Pancreas (tissue), 10 donors: ENCODE measurements at regions of chr7 and their contacts with region 1.

Region 1: DNA sequence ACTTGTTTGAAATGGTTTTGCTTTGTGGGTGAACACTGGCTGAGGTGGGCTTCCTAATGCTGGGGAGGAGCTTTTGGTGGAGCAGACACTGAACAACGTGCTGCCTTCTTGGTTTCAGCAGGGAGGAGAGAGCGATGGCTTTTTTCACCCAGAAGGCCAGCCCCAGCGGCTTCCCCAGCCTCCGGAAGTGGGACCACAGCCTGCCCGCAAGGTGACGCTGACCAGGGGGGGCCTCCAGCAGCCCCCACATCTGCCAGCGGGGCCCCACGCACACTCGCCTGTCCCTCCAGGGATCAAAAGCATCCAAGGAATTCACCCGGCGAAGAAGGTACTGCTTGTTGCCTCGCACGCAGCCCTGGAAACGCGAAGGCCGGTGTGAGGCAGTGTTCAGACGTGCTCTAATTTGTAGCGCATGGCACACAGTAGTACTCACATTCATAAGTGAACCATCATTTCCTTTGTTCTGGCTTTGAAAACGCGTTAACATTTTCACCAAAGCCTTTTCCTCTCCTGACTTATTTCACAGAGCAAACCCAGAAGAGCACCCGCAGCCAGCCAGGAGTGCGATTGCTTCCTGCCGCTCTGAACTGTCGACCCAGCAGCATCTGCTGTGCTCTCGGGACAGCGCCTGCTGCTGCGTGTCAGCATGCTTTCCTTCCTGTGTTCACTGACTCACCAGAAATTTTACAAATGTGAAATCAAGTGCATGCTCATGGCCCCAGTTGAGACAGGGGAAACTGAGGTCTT is 48.4 kb downstream of the SHH start:
- DNase-seq: no peak
- ATAC-seq: peak in 3 of 4 donors; percentile 36 to 63 (median 39)
- H3K4me3 ChIP-seq: no peak overlapping the region
- H3K27ac ChIP-seq: peak overlapping the region in 1 of 4 donors; percentile 13
- H3K4me1 ChIP-seq: peaks cover 0 to 3% (median 0%) of the 10 kb centered on the region in 3 donors
- H3K27me3 ChIP-seq: no peaks in the 10 kb centered on the region
- CTCF ChIP-seq: no peak

Region 2: GRCh38 chr7:154867068-154867467 is 896.8 kb before region 1 on chr7:
- intact Hi-C with region 1: no loop called
- DNase-seq: no peak
- ATAC-seq: no peak
- H3K4me3 ChIP-seq: no peak overlapping the region
- H3K27ac ChIP-seq: no peak overlapping the region
- H3K4me1 ChIP-seq: no peaks in the 10 kb centered on the region
- H3K27me3 ChIP-seq: no peaks in the 10 kb centered on the region
- CTCF ChIP-seq: no peak

Region 3: GRCh38 chr7:155380221-155380861 is 383.5 kb before region 1 on chr7:
- intact Hi-C with region 1: loop called in 1 of 3 experiments (anchors 10 kb)
- DNase-seq: peak; percentile 67 to 87 (median 78)
- ATAC-seq: peak; percentile 84 to 92 (median 90)
- H3K4me3 ChIP-seq: no peak overlapping the region
- H3K27ac ChIP-seq: no peak overlapping the region
- H3K4me1 ChIP-seq: peaks cover 0 to 28% (median 8%) of the 10 kb centered on the region in 3 donors
- H3K27me3 ChIP-seq: peaks cover 5 to 62% (median 17%) of the 10 kb centered on the region in 4 donors
- CTCF ChIP-seq: peak; percentile 62 to 77 (median 72)

Region 4: DNA sequence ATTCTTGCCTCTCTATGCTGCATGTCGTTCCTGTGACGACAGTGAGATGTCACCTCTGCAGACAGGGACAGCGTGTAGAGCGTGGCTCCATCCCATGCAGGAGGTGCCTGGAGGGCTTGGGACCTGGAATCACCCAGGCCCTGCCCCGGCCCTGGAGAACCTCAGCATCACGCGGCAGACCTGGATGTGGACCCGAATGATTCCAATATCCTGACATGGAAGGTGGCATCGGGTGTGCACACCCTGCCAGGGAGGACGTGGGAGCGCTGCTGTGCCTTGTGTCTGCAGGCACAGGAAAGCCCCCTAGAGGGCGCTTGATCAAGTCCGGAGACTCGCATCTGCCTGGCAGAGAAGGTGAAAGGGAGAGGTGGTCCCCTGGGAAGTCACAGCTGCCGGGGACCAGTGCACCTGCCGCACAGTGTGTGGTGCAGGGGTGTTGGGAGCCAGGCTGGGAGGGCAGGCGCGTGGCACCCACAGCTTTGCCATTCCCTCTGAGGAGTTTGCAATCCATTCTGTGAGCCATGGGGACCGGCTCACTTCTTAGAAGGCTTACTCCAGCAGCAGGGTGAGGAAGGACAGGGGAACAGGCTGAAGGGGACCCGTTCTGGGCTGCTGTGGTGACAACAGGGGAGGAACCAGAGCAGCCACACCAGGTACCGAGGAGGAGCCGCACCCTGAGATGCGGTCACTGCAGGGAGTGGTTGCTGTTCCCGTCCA is 351.2 kb before region 1 on chr7:
- intact Hi-C with region 1: loop called in 1 of 3 experiments (anchors 10 kb)
- DNase-seq: peak; percentile 35 to 85 (median 72)
- ATAC-seq: peak; percentile 56 to 95 (median 86)
- H3K4me3 ChIP-seq: no peak overlapping the region
- H3K27ac ChIP-seq: no peak overlapping the region
- H3K4me1 ChIP-seq: no peaks in the 10 kb centered on the region
- H3K27me3 ChIP-seq: no peaks in the 10 kb centered on the region
- CTCF ChIP-seq: peak; percentile 78 to 83 (median 82)

Region 5: GRCh38 chr7:155685070-155685790 is 78.6 kb before region 1 on chr7:
- intact Hi-C with region 1: no loop called
- DNase-seq: no peak
- ATAC-seq: no peak
- H3K4me3 ChIP-seq: no peak overlapping the region
- H3K27ac ChIP-seq: no peak overlapping the region
- H3K4me1 ChIP-seq: peaks cover 9 to 14% (median 12%) of the 10 kb centered on the region in 3 donors
- H3K27me3 ChIP-seq: no peaks in the 10 kb centered on the region
- CTCF ChIP-seq: no peak